ENCODE measurements at regions of chr19 and their contacts with region 1.

Region 1: DNA sequence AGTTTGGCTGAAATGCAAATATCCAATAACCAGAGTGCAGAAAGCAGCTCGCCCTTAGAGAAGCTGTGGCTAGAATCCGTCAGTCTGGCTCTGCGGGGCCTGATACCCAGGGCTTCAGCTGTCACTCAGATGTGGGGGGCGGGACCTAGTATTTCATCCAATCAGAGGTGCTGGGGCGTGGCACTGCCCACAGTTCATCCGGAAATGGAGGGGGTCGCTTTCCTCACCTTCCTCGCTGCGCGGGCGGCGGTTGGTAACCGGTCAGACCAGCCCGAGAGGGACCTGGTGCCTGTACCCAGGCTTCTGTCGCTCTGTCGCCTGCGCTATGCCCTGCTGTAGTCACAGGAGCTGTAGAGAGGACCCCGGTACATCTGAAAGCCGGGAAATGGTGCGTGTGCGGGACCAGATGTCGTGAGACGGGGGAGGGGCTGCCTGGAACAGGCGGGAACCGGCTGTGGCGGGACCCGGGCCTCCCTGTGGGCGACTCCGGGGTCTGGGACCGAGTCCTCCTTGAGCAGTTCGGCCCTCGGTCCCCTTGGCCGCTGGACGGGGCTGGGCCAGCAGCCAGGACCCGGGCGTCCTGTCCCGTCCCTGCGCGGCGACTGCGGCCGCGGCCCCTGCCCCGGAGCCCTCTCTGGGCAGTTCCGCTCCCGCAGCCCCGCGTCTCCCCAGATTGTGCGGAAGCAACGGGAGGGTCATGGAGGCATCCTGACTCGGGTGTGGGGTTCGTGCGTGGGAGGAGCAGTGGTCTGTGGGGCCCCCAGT is at the start of gene ZNF700:
- DNase-seq: peak; percentile 97
- ATAC-seq: peak; percentile 91
- H3K4me3 Mint-ChIP-seq: peak within 1 kb of the TSS; percentile 96
- H3K27ac Mint-ChIP-seq: peak within 1 kb of the TSS; percentile 99
- H3K4me1 Mint-ChIP-seq: peaks cover 24% of the 10 kb centered on the region
- H3K27me3 Mint-ChIP-seq: no peaks in the 10 kb centered on the region; the same call in 1 of the 2 replicates
- CTCF ChIP-seq: no peak
- total RNA-seq, gene ZNF700: 9.1 to 11.4 TPM (median 10.7 TPM) in 3 replicates

Region 2: DNA sequence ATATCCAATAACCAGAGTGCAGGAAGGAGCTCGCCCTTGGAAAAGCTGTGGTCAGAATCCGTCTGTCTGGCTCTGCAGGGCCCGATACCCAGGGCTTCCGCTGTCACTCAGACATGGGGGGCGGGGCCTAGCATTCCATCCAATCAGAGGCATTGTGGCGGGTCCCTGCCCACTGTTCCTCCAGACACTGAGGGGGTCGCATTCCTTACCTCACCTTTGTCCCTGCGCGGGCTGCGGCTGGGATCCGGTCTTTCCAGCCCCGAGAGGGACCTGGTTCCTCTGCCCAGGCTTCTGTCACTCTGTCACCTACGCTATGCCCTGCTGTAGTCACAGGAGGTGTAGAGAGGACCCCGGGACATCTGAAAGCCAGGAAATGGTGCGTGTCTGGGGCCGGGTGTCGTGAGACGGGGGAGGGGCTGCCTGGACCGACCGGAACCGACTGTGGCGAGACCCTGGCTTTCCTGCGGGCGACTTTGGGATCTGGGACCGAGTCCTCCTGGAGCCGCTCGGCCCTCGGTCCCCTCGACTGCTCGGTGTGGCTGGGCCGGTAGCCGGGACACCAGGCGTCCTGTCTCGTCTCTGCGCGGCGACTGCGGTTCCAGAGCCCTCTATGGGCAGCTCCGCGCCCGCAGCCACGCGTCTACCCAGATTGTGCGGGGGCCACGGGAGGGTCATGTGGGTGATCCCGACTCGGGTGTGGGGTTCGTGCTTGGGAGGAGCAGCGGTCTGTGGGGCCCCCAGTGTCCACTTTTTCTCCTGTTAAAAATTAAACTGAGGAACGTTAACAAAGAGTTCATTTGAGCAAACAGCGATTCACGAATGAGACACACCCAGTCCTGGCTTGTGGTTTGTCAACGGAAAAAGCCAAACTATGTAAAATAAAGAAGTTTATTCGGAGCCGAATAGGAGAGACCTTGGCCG is 37.2 kb before region 1 on chr19 and contains the start of gene ZNF69:
- CTCF ChIA-PET with region 1: interaction called, 11 read pairs
- POLR2A ChIA-PET with region 1: no interaction called
- DNase-seq: peak; percentile 98
- ATAC-seq: peak; percentile 98
- H3K4me3 Mint-ChIP-seq: peak within 1 kb of the TSS; percentile 86
- H3K27ac Mint-ChIP-seq: peak within 1 kb of the TSS; percentile 99
- H3K4me1 Mint-ChIP-seq: peaks cover 43% of the 10 kb centered on the region
- H3K27me3 Mint-ChIP-seq: no peaks in the 10 kb centered on the region; the same call in 1 of the 2 replicates
- CTCF ChIP-seq: no peak
- total RNA-seq, gene ZNF69: 24.5 to 28.7 TPM (median 24.6 TPM) in 3 replicates

Region 3: DNA sequence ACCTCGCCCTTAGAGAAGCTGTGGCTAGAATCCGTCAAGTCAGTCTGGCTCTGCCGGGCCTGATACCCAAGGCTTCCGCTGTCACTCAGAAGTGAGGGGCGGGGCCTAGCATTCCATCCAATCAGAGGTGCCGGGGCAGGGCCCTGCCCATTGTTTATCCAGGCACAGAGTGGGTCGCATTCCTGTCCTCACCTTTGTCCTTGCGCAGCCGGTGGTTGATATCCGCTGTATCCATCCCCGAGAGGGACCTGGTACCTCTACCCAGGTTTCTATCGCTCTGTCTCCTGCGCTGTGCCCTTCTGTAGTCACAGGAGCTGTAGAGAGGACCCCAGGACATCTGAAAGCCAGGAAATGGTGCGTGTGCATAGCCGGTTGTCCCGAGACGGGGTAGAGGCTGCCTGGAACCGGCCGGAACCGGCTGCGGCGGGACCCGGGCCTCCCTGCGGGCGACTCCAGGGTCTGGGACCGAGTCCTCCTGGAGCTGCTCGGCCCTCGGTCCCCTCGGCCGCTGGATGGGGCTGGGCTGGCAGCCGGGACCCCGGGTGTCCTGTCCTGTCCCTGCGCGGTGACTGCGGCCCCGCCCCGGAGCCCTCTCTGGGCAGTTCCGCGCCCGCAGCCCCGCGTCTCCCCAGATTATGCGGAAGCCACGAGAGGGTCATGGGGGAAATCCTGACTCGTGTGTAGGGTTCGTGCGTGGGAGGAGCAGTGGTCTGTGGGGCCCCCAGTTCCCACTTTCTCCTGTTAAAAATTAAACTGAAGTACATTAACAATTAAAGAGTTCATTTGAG is 40.0 kb after region 1 on chr19 and contains the start of gene ZNF763:
- CTCF ChIA-PET with region 1: interaction called, 35 read pairs
- POLR2A ChIA-PET with region 1: interaction called, 3 read pairs
- DNase-seq: peak; percentile 99
- ATAC-seq: peak; percentile 92
- H3K4me3 Mint-ChIP-seq: peak within 1 kb of the TSS; percentile 82
- H3K27ac Mint-ChIP-seq: peak within 1 kb of the TSS; percentile 96
- H3K4me1 Mint-ChIP-seq: peaks cover 22% of the 10 kb centered on the region
- H3K27me3 Mint-ChIP-seq: peaks cover 20% of the 10 kb centered on the region
- CTCF ChIP-seq: no peak
- total RNA-seq, gene ZNF763: 2.4 to 3.1 TPM (median 2.9 TPM) in 3 replicates

Region 4: GRCh38 chr19:12035220-12036153 is 110.4 kb after region 1 on chr19 and contains the start of gene ZNF433:
- CTCF ChIA-PET with region 1: interaction called, 17 read pairs
- POLR2A ChIA-PET with region 1: interaction called, 3 read pairs
- DNase-seq: peak; percentile 99
- ATAC-seq: peak; percentile 98
- H3K4me3 Mint-ChIP-seq: peak within 1 kb of the TSS; percentile 83
- H3K27ac Mint-ChIP-seq: peak within 1 kb of the TSS; percentile 93
- H3K4me1 Mint-ChIP-seq: peaks cover 26% of the 10 kb centered on the region
- H3K27me3 Mint-ChIP-seq: peaks cover 32% of the 10 kb centered on the region
- CTCF ChIP-seq: no peak
- total RNA-seq, gene ZNF433: 2.9 TPM in 3 replicates

Region 5: GRCh38 chr19:12064590-12065538 is 139.8 kb after region 1 on chr19 and contains the start of gene ZNF844:
- CTCF ChIA-PET with region 1: interaction called, 18 read pairs
- POLR2A ChIA-PET with region 1: no interaction called
- DNase-seq: peak; percentile 98
- ATAC-seq: peak; percentile 94
- H3K4me3 Mint-ChIP-seq: peak within 1 kb of the TSS; percentile 87
- H3K27ac Mint-ChIP-seq: peak within 1 kb of the TSS; percentile 97
- H3K4me1 Mint-ChIP-seq: peaks cover 12% of the 10 kb centered on the region
- H3K27me3 Mint-ChIP-seq: no peaks in the 10 kb centered on the region
- CTCF ChIP-seq: no peak
- total RNA-seq, gene ZNF844: 9.1 to 10.5 TPM (median 9.4 TPM) in 3 replicates

Region 6: GRCh38 chr19:12126707-12127106 is 201.6 kb after region 1 on chr19:
- CTCF ChIA-PET with region 1: interaction called, 11 read pairs
- POLR2A ChIA-PET with region 1: no interaction called
- DNase-seq: peak; percentile 22
- ATAC-seq: peak; percentile 53
- H3K4me3 Mint-ChIP-seq: no peak overlapping the region
- H3K27ac Mint-ChIP-seq: 0 out of 2 replicates have a peak overlapping the region, but pooled peaks have one; percentile 37
- H3K4me1 Mint-ChIP-seq: 0 out of 2 replicates have a peak, but pooled peaks cover 4% of the 10 kb centered on the region
- H3K27me3 Mint-ChIP-seq: no peaks in the 10 kb centered on the region; the same call in 1 of the 2 replicates
- CTCF ChIP-seq: peak; percentile 39; the same call in 1 of the 2 replicates